ENCODE measurements at regions of chr2 and their contacts with region 1.

Region 1: DNA sequence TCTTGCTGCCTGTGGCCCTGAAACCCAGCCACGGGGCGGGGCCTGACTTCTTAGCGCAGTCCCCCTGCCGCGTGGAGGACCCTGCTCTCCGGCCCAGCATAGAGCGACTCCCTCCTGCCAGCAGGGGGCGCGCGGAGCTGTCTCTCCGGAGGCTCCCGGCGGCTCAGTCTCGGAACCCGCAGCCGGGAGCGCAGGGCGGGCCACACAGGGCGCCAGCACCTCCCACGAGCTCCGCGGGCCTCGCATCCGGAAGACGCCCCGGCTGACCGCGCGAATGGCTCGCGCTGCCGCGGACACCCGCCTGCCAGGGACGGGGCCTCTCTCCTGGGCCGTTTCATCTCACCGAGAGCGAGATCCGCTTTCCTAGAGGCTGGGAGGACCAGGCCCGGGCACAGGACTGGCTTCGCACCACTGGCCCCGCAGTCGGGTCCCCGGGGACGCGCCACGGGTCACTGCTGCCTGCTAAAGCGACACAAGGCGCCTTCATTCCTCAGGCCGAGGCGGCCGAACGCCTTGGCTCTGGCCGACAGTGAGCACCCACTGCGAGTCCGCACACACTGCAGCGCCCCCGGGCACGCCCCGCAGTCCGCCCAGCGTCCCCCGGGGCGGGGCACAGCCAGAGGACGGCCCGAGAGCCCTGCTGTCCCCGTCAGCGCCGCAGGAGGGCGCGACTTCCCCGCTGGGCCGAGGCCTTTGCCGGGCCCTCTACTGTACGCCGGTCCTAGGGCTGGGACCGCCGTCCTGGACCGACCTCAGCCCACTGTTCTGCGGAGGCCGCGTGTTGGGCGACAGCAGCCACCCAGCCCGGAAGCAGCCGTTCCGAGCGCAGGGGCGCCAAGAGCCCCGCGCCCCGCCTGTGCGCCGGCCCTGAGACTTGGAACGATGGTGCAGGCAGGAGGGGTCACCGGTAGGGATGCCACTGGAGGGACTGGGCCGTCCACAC is 39.0 kb upstream of the ARHGEF4 start:
- DNase-seq: peak; percentile 67 to 97
- H3K4me3 ChIP-seq: peak overlapping the region; percentile 33 to 73 (median 64)
- H3K27ac ChIP-seq: no peak overlapping the region
- H3K4me1 ChIP-seq: peaks cover 2 to 16% (median 7%) of the 10 kb centered on the region in 4 experiments; a peak in 6 of 7 replicates
- H3K27me3 ChIP-seq: peaks cover 0 to 15% (median 13%) of the 10 kb centered on the region in 4 experiments; a peak in 6 of 7 replicates
- CTCF ChIP-seq: peak; percentile 83 to 97 (median 88)
- EP300 ChIP-seq: no peak; a peak in 1 of 3 replicates
- POLR2A ChIP-seq: no peak
- RAD21 ChIP-seq: peak; percentile 88 to 96

Region 2: DNA sequence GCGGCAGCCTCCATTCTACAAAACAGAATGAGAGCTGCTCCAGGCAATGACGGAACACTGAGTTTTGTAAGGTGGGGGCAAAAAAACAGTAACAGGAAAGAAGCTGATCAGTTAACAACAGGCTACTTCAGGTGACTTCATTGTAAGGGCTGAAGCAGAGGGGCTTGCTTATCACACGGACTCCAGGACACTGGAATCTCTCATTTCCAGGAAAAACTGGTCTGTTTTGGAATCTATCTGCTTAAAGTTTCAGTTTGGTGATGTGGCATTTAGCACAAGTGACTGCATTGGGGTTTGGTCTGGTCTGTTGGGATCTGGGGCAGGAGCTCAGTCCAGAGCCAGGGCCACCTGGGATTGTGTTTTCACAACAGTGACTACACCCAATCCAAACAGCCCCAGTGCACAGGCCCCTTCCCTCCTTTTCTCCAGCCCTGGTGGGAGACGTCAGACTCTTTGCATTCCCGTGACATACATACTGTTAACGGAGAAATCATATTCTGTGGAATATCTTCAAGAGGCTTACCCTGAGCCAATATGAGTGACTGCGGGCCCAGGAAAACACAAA is 28.3 kb before region 1 on chr2:
- CTCF ChIA-PET with region 1: no interaction called
- POLR2A ChIA-PET with region 1: no interaction called
- DNase-seq: no peak
- H3K4me3 ChIP-seq: no peak overlapping the region
- H3K27ac ChIP-seq: no peak overlapping the region
- H3K4me1 ChIP-seq: no peaks in the 10 kb centered on the region
- H3K27me3 ChIP-seq: no peaks in the 10 kb centered on the region
- CTCF ChIP-seq: no peak
- EP300 ChIP-seq: no peak
- POLR2A ChIP-seq: no peak
- RAD21 ChIP-seq: no peak

Region 3: DNA sequence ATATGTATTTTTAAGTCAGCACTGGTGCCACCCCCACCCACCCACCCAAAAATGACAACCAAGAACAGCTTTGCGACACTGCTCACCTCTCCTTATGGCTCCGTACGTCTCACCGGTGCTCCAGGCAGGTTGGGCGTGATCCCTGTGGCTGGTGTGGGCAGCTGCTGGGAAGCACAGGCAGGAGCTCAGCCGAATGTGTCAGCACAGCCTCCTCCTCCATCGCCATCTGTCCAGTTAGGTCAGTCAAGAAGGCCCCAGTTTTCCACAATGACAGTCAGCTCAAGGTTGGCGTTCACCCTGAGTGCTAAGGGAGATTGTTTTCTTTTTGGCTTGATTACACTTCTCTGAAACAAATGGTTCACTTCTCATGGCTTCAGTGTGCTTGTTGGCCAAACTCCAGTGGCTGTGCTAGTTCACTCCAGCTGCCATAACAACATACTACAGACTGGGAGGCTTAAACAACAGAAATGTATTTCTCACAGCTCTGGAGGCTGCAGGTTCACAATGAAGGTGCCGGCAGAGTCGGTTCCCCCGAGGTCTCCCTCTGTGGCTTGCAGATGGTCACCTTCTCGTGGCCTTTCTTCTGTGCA is 12.2 kb before region 1 on chr2:
- CTCF ChIA-PET with region 1: interaction called, 12 read pairs
- POLR2A ChIA-PET with region 1: no interaction called
- DNase-seq: no peak
- H3K4me3 ChIP-seq: no peak overlapping the region
- H3K27ac ChIP-seq: no peak overlapping the region
- H3K4me1 ChIP-seq: no peaks in the 10 kb centered on the region
- H3K27me3 ChIP-seq: no peaks in the 10 kb centered on the region; a peak in 1 of 7 replicates
- CTCF ChIP-seq: no peak
- EP300 ChIP-seq: no peak
- POLR2A ChIP-seq: no peak
- RAD21 ChIP-seq: no peak

Region 4: GRCh38 chr2:130824492-130825061 is 26.8 kb after region 1 on chr2:
- CTCF ChIA-PET with region 1: interaction called, 58 read pairs
- POLR2A ChIA-PET with region 1: interaction called, 3 read pairs
- DNase-seq: peak in 1 of 2 experiments; percentile 41
- H3K4me3 ChIP-seq: no peak overlapping the region
- H3K27ac ChIP-seq: no peak overlapping the region
- H3K4me1 ChIP-seq: peaks cover 0 to 35% (median 13%) of the 10 kb centered on the region in 4 experiments; a peak in 6 of 7 replicates
- H3K27me3 ChIP-seq: no peaks in the 10 kb centered on the region
- CTCF ChIP-seq: peak in 1 of 3 experiments; percentile 3; a peak in 1 of 4 replicates
- EP300 ChIP-seq: no peak
- POLR2A ChIP-seq: no peak
- RAD21 ChIP-seq: no peak

Region 5: DNA sequence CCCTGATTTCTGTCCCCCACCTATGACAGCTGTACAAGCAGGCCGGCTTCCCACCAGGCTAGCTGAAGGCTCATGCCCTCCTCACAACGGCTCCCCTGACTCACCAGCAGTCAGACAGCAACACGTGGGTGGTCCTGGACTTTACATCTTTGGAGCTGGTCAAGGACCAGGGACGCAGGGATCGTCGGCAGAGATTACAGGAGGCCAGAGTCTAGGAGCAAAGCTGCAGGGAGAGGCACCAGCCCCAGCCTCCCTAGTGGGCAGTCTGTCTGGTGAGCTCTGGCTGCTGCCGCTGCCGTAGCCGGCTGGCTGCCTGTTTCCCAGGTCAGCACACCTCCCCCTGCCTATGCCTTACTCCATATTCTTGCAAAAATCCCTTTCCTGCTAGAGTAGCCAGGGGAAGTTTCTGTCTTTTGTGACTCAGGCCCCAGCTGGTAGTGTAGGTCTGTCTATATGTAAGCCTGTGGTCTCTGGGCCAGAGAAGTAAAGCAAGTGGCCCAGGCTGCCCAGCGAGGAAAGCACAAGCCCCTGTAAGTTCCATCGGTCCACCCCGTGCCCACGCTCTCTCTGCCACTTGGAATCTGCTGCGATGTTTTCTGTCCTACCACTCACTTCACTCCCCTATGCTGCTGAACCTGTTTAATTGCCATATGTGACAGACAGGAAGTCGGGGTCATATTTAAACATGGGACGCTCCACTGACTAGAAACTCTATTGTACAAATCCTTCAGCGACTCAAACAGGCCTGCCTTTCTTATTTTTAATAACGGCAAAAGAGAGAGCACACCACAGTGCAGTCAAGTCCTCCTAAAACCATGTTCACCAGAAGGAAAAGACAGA is 36.5 kb after region 1 on chr2:
- CTCF ChIA-PET with region 1: interaction called, 16 read pairs
- POLR2A ChIA-PET with region 1: no interaction called
- DNase-seq: no peak
- H3K4me3 ChIP-seq: no peak overlapping the region
- H3K27ac ChIP-seq: no peak overlapping the region
- H3K4me1 ChIP-seq: peaks cover 0 to 8% (median 3%) of the 10 kb centered on the region in 4 experiments; a peak in 5 of 7 replicates
- H3K27me3 ChIP-seq: peaks cover 3 to 20% (median 17%) of the 10 kb centered on the region in 4 experiments
- CTCF ChIP-seq: no peak
- EP300 ChIP-seq: no peak
- POLR2A ChIP-seq: no peak
- RAD21 ChIP-seq: no peak

Region 6: DNA sequence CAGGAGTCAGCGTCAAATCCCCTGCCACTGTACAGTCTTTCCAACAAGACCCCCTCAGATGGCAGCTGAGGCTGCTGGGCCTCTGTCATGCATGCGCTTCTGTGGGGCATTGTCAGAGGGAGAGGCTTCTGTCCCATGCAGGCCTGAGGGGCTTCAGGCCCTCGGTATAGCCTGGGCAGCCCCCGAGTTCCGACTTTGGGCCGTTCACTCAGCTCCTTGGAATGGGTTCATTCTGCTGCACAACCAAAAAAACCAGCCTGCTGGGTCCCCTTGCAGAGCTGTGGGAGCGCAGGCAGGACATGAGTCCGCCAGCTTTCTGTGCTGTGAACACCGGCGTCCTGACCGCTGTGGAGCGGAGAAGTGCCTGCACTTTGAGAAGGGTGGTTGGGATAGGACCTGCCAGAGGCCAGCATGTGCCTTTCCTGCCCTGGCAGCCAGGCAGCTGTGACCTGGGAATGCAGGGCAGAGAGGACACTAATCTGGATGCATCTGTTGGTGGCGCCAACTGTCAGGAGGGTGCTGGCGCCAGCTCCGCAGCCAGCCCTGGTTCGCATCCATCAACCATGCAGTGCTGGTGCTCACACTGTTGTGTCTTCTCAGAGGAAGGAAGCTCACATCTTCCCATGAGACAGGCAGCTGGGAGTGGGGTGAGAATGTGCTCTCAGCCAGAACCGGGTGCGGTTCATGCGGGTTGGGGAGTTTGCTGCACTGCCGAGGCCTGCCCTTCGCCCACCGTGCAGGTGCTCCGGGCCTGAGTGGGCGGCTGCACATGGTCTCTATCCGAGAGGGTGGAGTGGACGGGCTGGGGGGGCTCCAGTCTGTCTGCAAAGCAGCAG is 53.2 kb after region 1 on chr2:
- CTCF ChIA-PET with region 1: interaction called, 22 read pairs
- POLR2A ChIA-PET with region 1: no interaction called
- DNase-seq: no peak
- H3K4me3 ChIP-seq: no peak overlapping the region
- H3K27ac ChIP-seq: no peak overlapping the region
- H3K4me1 ChIP-seq: no peaks in the 10 kb centered on the region; a peak in 1 of 7 replicates
- H3K27me3 ChIP-seq: no peaks in the 10 kb centered on the region
- CTCF ChIP-seq: no peak
- EP300 ChIP-seq: no peak
- POLR2A ChIP-seq: no peak
- RAD21 ChIP-seq: no peak

Region 7: DNA sequence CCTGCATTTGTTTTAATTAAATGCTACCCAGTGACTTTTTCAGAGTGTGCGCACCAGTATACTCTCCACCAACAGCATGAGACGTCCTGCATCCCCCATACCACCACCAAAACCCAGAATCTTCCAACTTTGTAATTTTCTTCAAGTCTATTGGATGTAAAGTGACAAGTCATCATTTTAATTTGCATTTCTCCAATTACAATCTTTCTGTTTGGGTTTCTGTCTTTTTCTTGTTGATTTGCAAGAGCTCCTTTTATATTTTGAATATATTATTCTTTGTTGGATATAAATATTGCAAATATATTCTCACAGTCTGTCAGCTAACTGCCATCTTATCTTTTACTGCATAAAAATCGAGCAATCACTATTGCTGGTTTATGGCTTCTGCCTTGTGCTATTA is 198.9 kb after region 1 on chr2:
- CTCF ChIA-PET with region 1: no interaction called
- POLR2A ChIA-PET with region 1: no interaction called
- DNase-seq: no peak
- H3K4me3 ChIP-seq: no peak overlapping the region
- H3K27ac ChIP-seq: no peak overlapping the region
- H3K4me1 ChIP-seq: no peaks in the 10 kb centered on the region
- H3K27me3 ChIP-seq: no peaks in the 10 kb centered on the region
- CTCF ChIP-seq: no peak
- EP300 ChIP-seq: no peak
- POLR2A ChIP-seq: no peak
- RAD21 ChIP-seq: no peak